ENCODE measurements at regions of chr14 and their contacts with region 1.

Region 1: DNA sequence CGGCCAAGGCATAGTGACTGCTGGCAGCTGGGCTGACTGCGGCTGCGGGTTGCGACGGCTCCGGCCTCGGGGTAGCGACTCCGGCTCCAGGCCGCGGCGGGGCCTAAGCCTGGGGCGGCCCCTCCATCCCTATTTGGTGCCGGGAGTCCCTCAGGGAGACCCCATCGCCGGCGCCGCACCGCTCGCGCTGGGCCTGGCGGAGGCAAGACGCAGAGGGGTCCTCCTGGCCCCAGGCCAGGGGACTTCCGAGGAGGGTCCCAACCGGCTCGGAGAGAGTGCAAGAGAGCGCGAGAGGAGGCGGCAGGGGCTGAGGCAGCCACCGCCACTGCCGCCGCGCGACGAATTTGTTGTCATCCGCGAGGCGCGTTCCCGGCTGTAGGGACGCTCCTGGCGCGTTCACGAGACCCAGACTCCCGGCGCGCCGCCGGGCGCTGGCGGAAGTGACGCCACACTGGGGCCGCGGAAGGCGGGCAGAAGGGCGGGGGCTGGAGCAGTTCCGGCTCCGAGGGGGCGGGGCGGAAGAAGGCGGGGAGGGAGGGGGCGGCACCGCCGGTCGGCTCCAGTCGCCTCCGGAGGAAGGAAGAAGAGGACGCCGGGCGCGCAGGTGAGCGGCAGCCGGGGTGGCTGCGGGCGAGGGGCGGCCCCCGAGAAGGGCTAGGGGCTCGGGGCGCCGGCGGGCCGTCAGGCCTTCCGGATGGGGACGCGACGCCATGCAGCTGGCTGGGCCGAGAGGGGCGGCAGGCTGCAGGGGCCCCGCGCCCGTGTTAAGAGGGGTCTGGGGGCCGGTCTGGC is at the starts of genes ATG2B and GSKIP:
- DNase-seq: peak; percentile 94 to 99 (median 98)
- ATAC-seq: peak; percentile 78
- H3K4me3 ChIP-seq: peak within 1 kb of the TSS; percentile 89
- H3K4me3 Mint-ChIP-seq: peak within 1 kb of the TSS; percentile 95
- H3K27ac ChIP-seq: peak within 1 kb of the TSS; percentile 87 to 97
- H3K27ac Mint-ChIP-seq: peak within 1 kb of the TSS; percentile 89
- H3K4me1 ChIP-seq: peaks cover 28% of the 10 kb centered on the region
- H3K4me1 Mint-ChIP-seq: peaks cover 67% of the 10 kb centered on the region
- H3K27me3 ChIP-seq: no peaks in the 10 kb centered on the region
- H3K27me3 Mint-ChIP-seq: no peaks in the 10 kb centered on the region
- CTCF ChIP-seq: no peak
- total RNA-seq, gene ATG2B: 20.1 to 20.2 TPM
- total RNA-seq, gene GSKIP: 10.3 to 11.9 TPM

Region 2: DNA sequence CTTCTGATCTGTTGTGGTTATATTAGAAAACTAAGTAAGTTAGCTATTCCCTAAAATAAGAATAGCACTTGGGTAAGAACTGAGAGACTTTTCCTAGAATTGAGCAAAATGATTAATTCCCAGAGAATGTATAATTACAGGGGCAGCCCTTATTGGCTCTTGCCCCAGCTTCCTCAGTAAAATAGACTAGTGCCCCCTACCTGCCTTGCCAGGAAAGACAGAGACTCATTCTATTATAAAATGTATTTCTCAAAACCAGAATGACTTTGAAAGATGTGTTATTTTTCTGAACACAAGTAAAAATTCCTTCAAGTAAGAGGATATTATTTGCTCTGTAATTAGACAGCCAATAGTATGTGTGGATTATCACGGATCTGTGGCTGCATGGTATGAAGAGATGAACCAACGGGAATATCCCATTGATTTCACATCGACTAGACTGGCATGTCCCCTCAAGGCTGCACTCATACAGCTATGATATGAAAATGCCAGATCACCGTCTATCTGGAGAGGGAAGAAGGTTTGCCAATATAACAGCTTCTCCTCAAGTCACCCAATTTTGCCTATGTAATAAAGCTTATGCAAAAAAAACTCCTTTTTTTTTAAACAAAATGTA is 835.7 kb before region 1 on chr14:
- CTCF ChIA-PET with region 1: no interaction called
- POLR2A ChIA-PET with region 1: no interaction called
- intact Hi-C with region 1: loop called in 1 of 2 experiments (anchors 10 kb)
- DNase-seq: peak in 9 of 14 experiments; percentile 36 to 72 (median 48)
- ATAC-seq: no peak
- H3K4me3 ChIP-seq: no peak overlapping the region
- H3K4me3 Mint-ChIP-seq: no peak overlapping the region
- H3K27ac ChIP-seq: no peak overlapping the region
- H3K27ac Mint-ChIP-seq: peak overlapping the region; percentile 31
- H3K4me1 ChIP-seq: peaks cover 41% of the 10 kb centered on the region
- H3K4me1 Mint-ChIP-seq: peaks cover 63% of the 10 kb centered on the region
- H3K27me3 ChIP-seq: no peaks in the 10 kb centered on the region
- H3K27me3 Mint-ChIP-seq: no peaks in the 10 kb centered on the region
- CTCF ChIP-seq: peak; percentile 93

Region 3: DNA sequence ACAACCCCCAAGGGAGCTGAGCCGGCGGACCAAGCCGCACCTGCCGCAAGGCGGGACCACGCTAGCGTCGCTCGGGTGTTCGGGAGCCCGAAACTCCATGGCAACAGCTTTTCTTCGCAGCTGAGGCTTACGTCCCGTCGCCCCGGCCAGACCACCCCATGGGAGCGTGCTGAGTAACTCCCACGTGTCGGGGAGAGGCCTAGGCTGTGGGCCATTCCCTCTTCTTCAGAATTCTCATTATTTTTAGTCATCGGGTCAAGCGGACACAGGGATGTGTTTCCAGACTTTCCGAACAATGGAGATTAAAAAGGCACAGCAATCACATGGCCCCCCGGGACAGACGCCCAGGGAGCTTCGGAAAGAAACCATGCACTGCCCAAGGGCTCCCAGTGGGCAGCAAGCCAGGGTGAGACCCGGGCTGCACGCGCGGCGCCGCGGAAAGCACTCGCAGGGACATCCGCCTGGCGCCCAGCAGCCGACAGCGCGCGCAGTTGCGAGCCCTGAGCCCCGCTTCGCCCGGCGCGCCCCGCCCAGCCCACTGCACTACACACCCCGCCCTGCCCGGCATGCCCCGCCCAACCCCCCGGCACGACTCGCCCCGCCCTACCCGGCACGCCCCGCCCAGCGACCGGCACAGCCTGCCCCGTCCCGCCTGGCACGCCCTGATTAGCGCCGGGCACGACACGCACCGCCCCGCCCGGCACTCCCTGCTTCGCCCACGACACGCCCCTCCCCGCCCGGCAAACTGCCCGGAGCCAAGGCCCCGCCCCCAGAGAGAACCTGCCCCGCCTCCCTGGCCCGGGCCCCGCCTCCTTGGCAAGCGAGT is 28.3 kb after region 1 on chr14:
- CTCF ChIA-PET with region 1: interaction called, 4 read pairs
- POLR2A ChIA-PET with region 1: interaction called, 13 read pairs
- intact Hi-C with region 1: loop called (anchors 1 kb)
- DNase-seq: peak; percentile 97 to 100 (median 100)
- ATAC-seq: peak; percentile 93
- H3K4me3 ChIP-seq: peak overlapping the region; percentile 88
- H3K4me3 Mint-ChIP-seq: peak overlapping the region; percentile 91
- H3K27ac ChIP-seq: peak overlapping the region in 1 of 2 donors; percentile 35
- H3K27ac Mint-ChIP-seq: peak overlapping the region; percentile 66
- H3K4me1 ChIP-seq: peaks cover 17% of the 10 kb centered on the region
- H3K4me1 Mint-ChIP-seq: peaks cover 11% of the 10 kb centered on the region
- H3K27me3 ChIP-seq: no peaks in the 10 kb centered on the region
- H3K27me3 Mint-ChIP-seq: no peaks in the 10 kb centered on the region
- CTCF ChIP-seq: no peak

Region 4: GRCh38 chr14:96424109-96424989 is 61.2 kb after region 1 on chr14:
- CTCF ChIA-PET with region 1: no interaction called
- POLR2A ChIA-PET with region 1: no interaction called
- intact Hi-C with region 1: loop called in 1 of 2 experiments (anchors 2 kb)
- DNase-seq: peak in 7 of 14 experiments; percentile 1 to 78 (median 37)
- ATAC-seq: peak; percentile 78
- H3K4me3 ChIP-seq: peak overlapping the region; percentile 42
- H3K4me3 Mint-ChIP-seq: peak overlapping the region; percentile 77
- H3K27ac ChIP-seq: no peak overlapping the region
- H3K27ac Mint-ChIP-seq: no peak overlapping the region
- H3K4me1 ChIP-seq: peaks cover 8% of the 10 kb centered on the region
- H3K4me1 Mint-ChIP-seq: no peaks in the 10 kb centered on the region
- H3K27me3 ChIP-seq: no peaks in the 10 kb centered on the region
- H3K27me3 Mint-ChIP-seq: peaks cover 12% of the 10 kb centered on the region
- CTCF ChIP-seq: peak; percentile 92

Region 5: DNA sequence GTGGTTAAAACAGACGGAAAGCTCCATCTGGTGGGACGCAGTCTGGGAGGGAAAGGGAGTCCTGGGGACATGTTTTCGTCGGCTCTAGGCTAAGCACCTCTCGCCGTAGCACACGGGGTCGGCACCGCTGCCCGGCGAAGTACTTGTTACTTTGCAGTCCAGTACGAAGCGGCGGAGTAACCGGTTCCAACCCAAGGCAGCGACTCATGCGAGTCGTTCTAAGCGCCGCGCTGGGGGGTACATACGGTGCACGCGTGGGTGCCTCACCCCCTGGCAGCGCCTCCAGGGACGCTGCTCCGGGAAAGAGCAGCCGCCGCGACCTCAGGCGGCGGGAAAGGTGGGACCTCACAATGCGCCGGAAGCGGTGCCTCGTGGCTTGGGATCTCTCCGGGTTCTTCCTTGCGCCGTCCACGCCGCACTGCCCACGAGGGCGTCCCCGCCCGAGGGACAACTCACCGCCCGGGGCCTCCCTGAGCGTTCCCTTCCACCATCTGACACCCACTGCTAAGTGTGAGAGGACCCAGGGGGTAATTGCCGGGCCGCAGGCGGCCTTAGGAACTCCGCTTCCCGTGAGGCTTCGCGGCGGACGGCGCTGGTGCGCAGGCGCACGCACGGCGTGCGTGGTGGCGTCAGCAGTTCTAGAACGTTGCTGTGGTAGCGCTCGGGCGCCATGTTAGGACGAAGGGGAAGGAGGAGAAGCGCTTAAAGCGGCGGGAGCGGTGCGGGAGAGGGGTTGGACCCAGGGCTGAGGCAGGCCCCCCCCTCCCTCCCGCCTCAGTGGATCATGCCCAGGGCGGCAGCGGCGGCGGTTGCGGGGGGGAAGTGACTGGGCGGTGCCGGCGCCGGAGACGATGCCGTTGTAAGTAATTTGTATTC is 138.8 kb after region 1 on chr14 and contains the start of gene PAPOLA:
- CTCF ChIA-PET with region 1: no interaction called
- POLR2A ChIA-PET with region 1: no interaction called
- intact Hi-C with region 1: loop called (anchors 2 to 10 kb)
- DNase-seq: peak; percentile 90 to 99 (median 94)
- ATAC-seq: peak; percentile 87
- H3K4me3 ChIP-seq: peak within 1 kb of the TSS; percentile 80
- H3K4me3 Mint-ChIP-seq: peak within 1 kb of the TSS; percentile 97
- H3K27ac ChIP-seq: peak within 1 kb of the TSS; percentile 93 to 96
- H3K27ac Mint-ChIP-seq: peak within 1 kb of the TSS; percentile 87
- H3K4me1 ChIP-seq: peaks cover 33% of the 10 kb centered on the region
- H3K4me1 Mint-ChIP-seq: peaks cover 46% of the 10 kb centered on the region
- H3K27me3 ChIP-seq: no peaks in the 10 kb centered on the region
- H3K27me3 Mint-ChIP-seq: peaks cover 4% of the 10 kb centered on the region
- CTCF ChIP-seq: peak; percentile 17
- total RNA-seq, gene PAPOLA: 140 to 148 TPM

Region 6: DNA sequence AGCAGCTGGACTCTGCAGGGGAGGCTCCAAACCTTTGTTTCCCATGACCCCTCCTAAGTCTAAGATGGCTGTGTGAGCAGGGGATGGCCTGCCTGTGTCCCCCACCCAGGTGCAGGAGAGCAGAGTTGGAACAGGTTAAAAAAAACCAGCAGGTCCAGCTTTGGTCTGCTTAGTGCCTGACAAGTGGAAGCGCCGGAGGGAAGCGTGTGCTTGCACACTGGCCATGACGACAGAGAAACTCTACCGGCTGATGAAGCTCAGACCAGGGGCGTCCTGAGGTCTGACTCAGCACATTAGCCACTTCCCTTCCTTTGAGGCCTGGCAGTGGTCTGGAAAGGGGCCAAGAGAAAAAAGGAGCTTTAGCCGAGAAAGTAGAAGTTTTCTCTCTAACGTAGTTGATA is 714.1 kb after region 1 on chr14:
- CTCF ChIA-PET with region 1: no interaction called
- POLR2A ChIA-PET with region 1: no interaction called
- intact Hi-C with region 1: no loop called
- DNase-seq: peak in 4 of 14 experiments; percentile 10 to 56 (median 41)
- ATAC-seq: no peak
- H3K4me3 ChIP-seq: no peak overlapping the region
- H3K4me3 Mint-ChIP-seq: no peak overlapping the region
- H3K27ac ChIP-seq: no peak overlapping the region
- H3K27ac Mint-ChIP-seq: no peak overlapping the region
- H3K4me1 ChIP-seq: peaks cover 13% of the 10 kb centered on the region
- H3K4me1 Mint-ChIP-seq: peaks cover 10% of the 10 kb centered on the region
- H3K27me3 ChIP-seq: no peaks in the 10 kb centered on the region
- H3K27me3 Mint-ChIP-seq: peaks cover 6% of the 10 kb centered on the region
- CTCF ChIP-seq: no peak

Measured in CD4-positive, alpha-beta T cell (primary cell).